ENCODE measurements at regions of chr2 and their contacts with region 1.

Region 1: GRCh38 chr2:64133354-64133753 is 10.9 kb downstream of the PELI1 start:
- DNase-seq: no peak
- H3K4me3 ChIP-seq: no peak overlapping the region
- H3K27me3 ChIP-seq: no peaks in the 10 kb centered on the region
- CTCF ChIP-seq: no peak

Region 2: GRCh38 chr2:64232261-64232660 is 98.9 kb after region 1 on chr2:
- CTCF ChIA-PET with region 1: no interaction called
- POLR2A ChIA-PET with region 1: interaction called, 18 read pairs
- DNase-seq: no peak
- H3K4me3 ChIP-seq: no peak overlapping the region
- H3K27me3 ChIP-seq: peaks cover 11% of the 10 kb centered on the region
- CTCF ChIP-seq: no peak

Region 3: GRCh38 chr2:64562148-64562784 is 428.9 kb after region 1 on chr2:
- CTCF ChIA-PET with region 1: no interaction called
- POLR2A ChIA-PET with region 1: no interaction called
- DNase-seq: no peak
- H3K4me3 ChIP-seq: no peak overlapping the region
- H3K27me3 ChIP-seq: no peaks in the 10 kb centered on the region
- CTCF ChIP-seq: peak; percentile 36; the same call in 1 of the 2 replicates